CD14-positive monocyte (primary cell): ENCODE measurements at regions of chr19 and their contacts with region 1.

Region 1: DNA sequence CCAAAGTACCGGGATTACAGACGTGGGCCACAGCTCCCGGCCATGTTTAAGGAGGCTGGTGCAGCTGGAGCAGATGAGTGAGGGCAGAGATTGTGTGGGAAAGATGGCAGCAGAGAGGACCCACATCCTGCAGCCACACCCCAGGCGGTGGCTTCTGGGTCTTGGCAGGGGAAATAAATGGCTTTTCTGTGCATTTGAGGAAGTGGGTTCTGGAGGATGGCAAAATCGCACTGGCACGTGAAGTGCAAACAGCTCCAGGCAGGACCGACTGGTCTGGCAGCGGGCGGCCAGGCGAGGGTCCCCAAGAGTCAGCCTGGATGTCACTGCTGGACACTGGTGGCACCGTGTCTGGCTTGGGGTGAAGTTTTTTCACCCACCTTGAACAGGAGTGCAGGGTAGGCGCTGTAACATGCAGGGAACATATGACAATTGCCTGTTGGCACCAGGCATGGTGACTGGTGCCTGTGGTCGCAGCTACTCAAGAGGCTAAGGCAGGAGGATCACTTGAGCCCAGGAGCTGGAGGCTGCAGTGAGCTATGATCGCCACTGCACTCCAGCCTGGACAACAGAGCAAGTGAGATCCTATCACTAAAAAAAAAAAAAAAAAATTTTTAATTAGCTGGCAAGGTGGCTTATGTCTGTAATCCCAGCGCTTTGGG is 8.5 kb downstream of the B3GNT3 start:
- DNase-seq: peak; percentile 65 to 70 (median 69)
- H3K4me3 ChIP-seq: peak overlapping the region in 1 of 3 experiments; percentile 42
- H3K4me3 Mint-ChIP-seq: peak overlapping the region; percentile 61 to 87
- H3K27ac ChIP-seq: peak overlapping the region; percentile 34 to 65
- H3K27ac Mint-ChIP-seq: peak overlapping the region; percentile 35 to 91 (median 81)
- H3K4me1 ChIP-seq: peaks cover 19 to 20% of the 10 kb centered on the region in 2 donors
- H3K4me1 Mint-ChIP-seq: peaks cover 23% of the 10 kb centered on the region
- H3K27me3 ChIP-seq: peaks cover 0 to 9% of the 10 kb centered on the region in 2 donors
- H3K27me3 Mint-ChIP-seq: peaks cover 27 to 37% (median 30%) of the 10 kb centered on the region in 3 donors
- CTCF ChIP-seq: no peak

Region 2: GRCh38 chr19:17834350-17835181 is 31.2 kb after region 1 on chr19:
- intact Hi-C with region 1: loop called in 1 of 2 experiments (anchors 5 kb)
- DNase-seq: no peak
- H3K4me3 ChIP-seq: no peak overlapping the region
- H3K4me3 Mint-ChIP-seq: no peak overlapping the region
- H3K27ac ChIP-seq: no peak overlapping the region
- H3K27ac Mint-ChIP-seq: no peak overlapping the region
- H3K4me1 ChIP-seq: no peaks in the 10 kb centered on the region
- H3K4me1 Mint-ChIP-seq: no peaks in the 10 kb centered on the region
- H3K27me3 ChIP-seq: no peaks in the 10 kb centered on the region
- H3K27me3 Mint-ChIP-seq: no peaks in the 10 kb centered on the region
- CTCF ChIP-seq: no peak